GM12878 (cell line): ENCODE measurements at regions of chr4 and their contacts with region 1.

Region 1: GRCh38 chr4:48275247-48275646 is 5.6 kb upstream of the TEC start:
- DNase-seq: peak; percentile 42
- ATAC-seq: peak; percentile 80
- H3K4me3 ChIP-seq: no peak overlapping the region
- H3K27ac ChIP-seq: no peak overlapping the region
- H3K4me1 ChIP-seq: peaks cover 12% of the 10 kb centered on the region
- H3K27me3 ChIP-seq: no peaks in the 10 kb centered on the region
- CTCF ChIP-seq: peak; percentile 78 to 85 (median 81); a peak in 5 of 6 replicates
- EP300 ChIP-seq: no peak
- POLR2A ChIP-seq: no peak
- RAD21 ChIP-seq: peak; percentile 73

Region 2: GRCh38 chr4:47135210-47135609 is 1140.0 kb before region 1 on chr4:
- CTCF ChIA-PET with region 1: no interaction called
- POLR2A ChIA-PET with region 1: no interaction called
- RAD21 ChIA-PET with region 1: no interaction called
- SMC1A ChIA-PET with region 1: no interaction called
- in situ Hi-C with region 1: no loop called
- intact Hi-C with region 1: no loop called
- DNase-seq: no peak
- ATAC-seq: no peak
- H3K4me3 ChIP-seq: no peak overlapping the region
- H3K27ac ChIP-seq: no peak overlapping the region
- H3K4me1 ChIP-seq: no peaks in the 10 kb centered on the region
- H3K27me3 ChIP-seq: no peaks in the 10 kb centered on the region; a peak in 1 of 4 replicates
- CTCF ChIP-seq: no peak
- EP300 ChIP-seq: no peak
- POLR2A ChIP-seq: no peak
- RAD21 ChIP-seq: no peak

Region 3: GRCh38 chr4:48016141-48017103 is 258.8 kb before region 1 on chr4 and contains the starts of genes CNGA1 and NIPAL1:
- CTCF ChIA-PET with region 1: interaction called, 10 read pairs
- POLR2A ChIA-PET with region 1: no interaction called
- RAD21 ChIA-PET with region 1: no interaction called
- SMC1A ChIA-PET with region 1: no interaction called
- in situ Hi-C with region 1: no loop called
- intact Hi-C with region 1: no loop called
- DNase-seq: no peak
- ATAC-seq: peak; percentile 95
- H3K4me3 ChIP-seq: peak within 1 kb of the TSS; percentile 89
- H3K27ac ChIP-seq: peak within 1 kb of the TSS; percentile 30; the same call in 1 of the 2 replicates
- H3K4me1 ChIP-seq: no peaks in the 10 kb centered on the region
- H3K27me3 ChIP-seq: no peaks in the 10 kb centered on the region; a peak in 1 of 4 replicates
- CTCF ChIP-seq: peak; percentile 41 to 52 (median 48); a peak in 5 of 6 replicates
- EP300 ChIP-seq: no peak
- POLR2A ChIP-seq: peak; percentile 63
- RAD21 ChIP-seq: peak; percentile 58
- polyA plus RNA-seq, gene CNGA1: 7.9 to 8.9 TPM
- polyA plus RNA-seq, gene NIPAL1: 1.1 to 2.0 TPM

Region 4: GRCh38 chr4:48133669-48134068 is 141.6 kb before region 1 on chr4:
- CTCF ChIA-PET with region 1: interaction called, 58 read pairs
- POLR2A ChIA-PET with region 1: interaction called, 6 read pairs
- RAD21 ChIA-PET with region 1: interaction called, 39 read pairs
- SMC1A ChIA-PET with region 1: interaction called, 41 read pairs
- in situ Hi-C with region 1: no loop called
- intact Hi-C with region 1: loop called (anchors 1 kb)
- DNase-seq: no peak
- ATAC-seq: no peak
- H3K4me3 ChIP-seq: no peak overlapping the region
- H3K27ac ChIP-seq: no peak overlapping the region
- H3K4me1 ChIP-seq: peaks cover 5% of the 10 kb centered on the region
- H3K27me3 ChIP-seq: no peaks in the 10 kb centered on the region
- CTCF ChIP-seq: no peak
- EP300 ChIP-seq: no peak
- POLR2A ChIP-seq: no peak
- RAD21 ChIP-seq: no peak

Region 5: DNA sequence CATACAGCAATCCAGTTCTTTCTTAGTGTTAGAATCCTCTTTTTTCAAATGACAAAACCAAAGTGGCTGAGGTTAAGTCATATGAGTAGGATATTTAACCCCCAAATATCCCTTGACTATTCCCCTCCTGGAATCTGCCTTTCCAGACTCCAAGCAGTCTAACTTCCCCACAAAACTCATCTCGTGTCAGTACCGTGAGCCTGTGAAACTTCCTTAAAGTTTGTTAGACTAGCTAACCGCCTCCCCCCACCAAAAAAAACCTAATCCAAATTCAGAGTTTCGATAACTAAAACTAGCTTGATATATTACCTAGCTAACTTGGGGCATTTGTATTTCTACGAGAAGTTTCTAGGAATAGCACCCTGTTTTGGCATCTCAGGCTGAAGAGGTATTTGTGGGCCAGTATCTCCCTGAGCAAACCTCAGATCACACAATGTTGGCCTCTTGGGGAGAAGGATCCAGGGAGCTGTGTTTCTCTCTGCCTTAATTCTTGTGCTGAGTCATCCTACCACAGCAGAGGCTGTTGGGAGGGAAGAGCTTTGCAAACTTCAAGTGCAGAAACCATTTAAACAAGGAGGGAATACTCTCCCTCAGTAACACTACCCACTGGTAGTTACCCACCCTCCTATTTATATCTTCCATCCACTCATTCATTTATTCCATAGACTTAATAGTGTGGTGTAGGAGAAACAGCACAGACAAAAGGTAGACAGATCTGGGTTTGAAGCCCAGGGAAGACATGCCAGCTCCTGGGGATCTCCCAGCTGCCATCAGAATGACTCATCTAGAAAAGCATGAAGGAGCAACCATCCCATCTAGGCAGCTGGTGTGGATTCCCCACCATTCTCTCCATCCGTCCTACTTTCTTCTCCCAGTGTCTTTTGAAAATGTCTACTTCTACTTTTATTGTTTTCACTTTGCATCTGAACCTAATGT is 101.9 kb before region 1 on chr4:
- CTCF ChIA-PET with region 1: interaction called, 37 read pairs
- POLR2A ChIA-PET with region 1: interaction called, 5 read pairs
- RAD21 ChIA-PET with region 1: interaction called, 6 read pairs
- SMC1A ChIA-PET with region 1: interaction called, 22 read pairs
- in situ Hi-C with region 1: no loop called
- intact Hi-C with region 1: no loop called
- DNase-seq: peak; percentile 55
- ATAC-seq: peak; percentile 85
- H3K4me3 ChIP-seq: no peak overlapping the region
- H3K27ac ChIP-seq: peak overlapping the region; percentile 59
- H3K4me1 ChIP-seq: peaks cover 36% of the 10 kb centered on the region
- H3K27me3 ChIP-seq: no peaks in the 10 kb centered on the region
- CTCF ChIP-seq: no peak
- EP300 ChIP-seq: no peak; a peak in 1 of 4 replicates
- POLR2A ChIP-seq: no peak
- RAD21 ChIP-seq: no peak

Region 6: GRCh38 chr4:48212165-48212564 is 63.1 kb before region 1 on chr4:
- CTCF ChIA-PET with region 1: interaction called, 10 read pairs
- POLR2A ChIA-PET with region 1: interaction called, 9 read pairs
- RAD21 ChIA-PET with region 1: interaction called, 18 read pairs
- SMC1A ChIA-PET with region 1: interaction called, 15 read pairs
- in situ Hi-C with region 1: no loop called
- intact Hi-C with region 1: loop called (anchors 2 kb)
- DNase-seq: no peak
- ATAC-seq: peak; percentile 85
- H3K4me3 ChIP-seq: peak overlapping the region; percentile 54; the same call in 1 of the 2 replicates
- H3K27ac ChIP-seq: peak overlapping the region; percentile 90
- H3K4me1 ChIP-seq: peaks cover 43% of the 10 kb centered on the region
- H3K27me3 ChIP-seq: no peaks in the 10 kb centered on the region
- CTCF ChIP-seq: no peak
- EP300 ChIP-seq: peak; percentile 60 to 72; a peak in 3 of 4 replicates
- POLR2A ChIP-seq: peak; percentile 37; the same call in 1 of the 2 replicates
- RAD21 ChIP-seq: no peak

Region 7: GRCh38 chr4:48296365-48296764 is 21.1 kb after region 1 on chr4:
- CTCF ChIA-PET with region 1: interaction called, 33 read pairs
- POLR2A ChIA-PET with region 1: no interaction called
- RAD21 ChIA-PET with region 1: no interaction called
- SMC1A ChIA-PET with region 1: interaction called, 3 read pairs
- in situ Hi-C with region 1: no loop called
- intact Hi-C with region 1: no loop called
- DNase-seq: no peak
- ATAC-seq: peak; percentile 95
- H3K4me3 ChIP-seq: no peak overlapping the region
- H3K27ac ChIP-seq: no peak overlapping the region
- H3K4me1 ChIP-seq: peaks cover 7% of the 10 kb centered on the region
- H3K27me3 ChIP-seq: no peaks in the 10 kb centered on the region
- CTCF ChIP-seq: 0 out of 6 replicates have a peak, but pooled peaks of 1 of the 3 experiments have one; percentile 7
- EP300 ChIP-seq: no peak
- POLR2A ChIP-seq: no peak
- RAD21 ChIP-seq: no peak